ENCODE measurements at regions of chr11 and their contacts with region 1.

Region 1: GRCh38 chr11:1772270-1773130 is 8.8 kb upstream of the CTSD start:
- DNase-seq: peak; percentile 53 to 61
- ATAC-seq: peak; percentile 86 to 98 (median 87)
- H3K4me3 ChIP-seq: no peak overlapping the region
- H3K4me3 Mint-ChIP-seq: peak overlapping the region; percentile 68
- H3K27ac ChIP-seq: no peak overlapping the region
- H3K27ac Mint-ChIP-seq: peak overlapping the region; percentile 27 to 90
- H3K4me1 ChIP-seq: peaks cover 43% of the 10 kb centered on the region
- H3K4me1 Mint-ChIP-seq: peaks cover 41 to 46% of the 10 kb centered on the region in 2 donors
- H3K27me3 ChIP-seq: no peaks in the 10 kb centered on the region
- H3K27me3 Mint-ChIP-seq: no peaks in the 10 kb centered on the region
- CTCF ChIP-seq: no peak

Region 2: DNA sequence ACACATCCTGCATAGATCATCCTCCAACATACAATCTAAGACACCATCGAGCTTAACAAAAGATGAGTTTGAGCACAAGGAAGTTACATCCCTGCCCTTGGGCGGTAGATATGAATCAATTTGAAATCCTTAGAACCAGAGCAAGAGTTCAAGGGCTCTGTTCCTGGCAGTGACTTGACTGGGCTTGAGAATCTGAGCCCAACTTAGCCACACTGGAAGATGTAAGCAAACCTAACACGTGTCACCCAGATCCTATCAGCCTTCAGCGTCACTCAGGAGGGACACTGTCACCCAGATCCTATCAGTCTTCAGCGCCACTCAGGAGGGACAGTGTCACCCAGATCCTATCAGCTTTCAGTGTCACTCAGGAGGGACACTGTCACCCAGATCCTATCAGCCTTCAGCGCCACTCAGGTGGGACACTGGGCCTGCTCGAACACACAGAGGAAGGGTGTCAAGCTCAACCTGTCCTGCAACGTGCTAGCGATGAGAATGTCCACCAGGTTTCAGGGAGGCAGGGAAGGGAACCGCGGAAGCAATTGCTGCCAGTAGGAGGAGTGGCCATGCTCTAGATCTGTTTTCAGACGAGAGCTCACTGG is 24.0 kb after region 1 on chr11:
- intact Hi-C with region 1: no loop called
- DNase-seq: no peak
- ATAC-seq: peak in 1 of 3 donors; percentile 62
- H3K4me3 ChIP-seq: no peak overlapping the region
- H3K4me3 Mint-ChIP-seq: no peak overlapping the region
- H3K27ac ChIP-seq: no peak overlapping the region
- H3K27ac Mint-ChIP-seq: no peak overlapping the region
- H3K4me1 ChIP-seq: peaks cover 9% of the 10 kb centered on the region
- H3K4me1 Mint-ChIP-seq: peaks cover 5 to 10% of the 10 kb centered on the region in 2 donors
- H3K27me3 ChIP-seq: no peaks in the 10 kb centered on the region
- H3K27me3 Mint-ChIP-seq: peaks cover 7 to 13% of the 10 kb centered on the region in 2 donors
- CTCF ChIP-seq: no peak

Region 3: GRCh38 chr11:1827095-1827813 is 54.8 kb after region 1 on chr11:
- intact Hi-C with region 1: loop called (anchors 10 kb)
- DNase-seq: no peak
- ATAC-seq: no peak
- H3K4me3 ChIP-seq: no peak overlapping the region
- H3K4me3 Mint-ChIP-seq: no peak overlapping the region
- H3K27ac ChIP-seq: no peak overlapping the region
- H3K27ac Mint-ChIP-seq: no peak overlapping the region
- H3K4me1 ChIP-seq: peaks cover 10% of the 10 kb centered on the region
- H3K4me1 Mint-ChIP-seq: peaks cover 0 to 5% of the 10 kb centered on the region in 2 donors
- H3K27me3 ChIP-seq: peaks cover 4% of the 10 kb centered on the region
- H3K27me3 Mint-ChIP-seq: peaks cover 13 to 16% of the 10 kb centered on the region in 2 donors
- CTCF ChIP-seq: no peak